Activated B cell treated with CpG ODN at 0.5 μM for 24 hours (primary cell): ENCODE measurements at regions of chr1 and their contacts with region 1.

Region 1: DNA sequence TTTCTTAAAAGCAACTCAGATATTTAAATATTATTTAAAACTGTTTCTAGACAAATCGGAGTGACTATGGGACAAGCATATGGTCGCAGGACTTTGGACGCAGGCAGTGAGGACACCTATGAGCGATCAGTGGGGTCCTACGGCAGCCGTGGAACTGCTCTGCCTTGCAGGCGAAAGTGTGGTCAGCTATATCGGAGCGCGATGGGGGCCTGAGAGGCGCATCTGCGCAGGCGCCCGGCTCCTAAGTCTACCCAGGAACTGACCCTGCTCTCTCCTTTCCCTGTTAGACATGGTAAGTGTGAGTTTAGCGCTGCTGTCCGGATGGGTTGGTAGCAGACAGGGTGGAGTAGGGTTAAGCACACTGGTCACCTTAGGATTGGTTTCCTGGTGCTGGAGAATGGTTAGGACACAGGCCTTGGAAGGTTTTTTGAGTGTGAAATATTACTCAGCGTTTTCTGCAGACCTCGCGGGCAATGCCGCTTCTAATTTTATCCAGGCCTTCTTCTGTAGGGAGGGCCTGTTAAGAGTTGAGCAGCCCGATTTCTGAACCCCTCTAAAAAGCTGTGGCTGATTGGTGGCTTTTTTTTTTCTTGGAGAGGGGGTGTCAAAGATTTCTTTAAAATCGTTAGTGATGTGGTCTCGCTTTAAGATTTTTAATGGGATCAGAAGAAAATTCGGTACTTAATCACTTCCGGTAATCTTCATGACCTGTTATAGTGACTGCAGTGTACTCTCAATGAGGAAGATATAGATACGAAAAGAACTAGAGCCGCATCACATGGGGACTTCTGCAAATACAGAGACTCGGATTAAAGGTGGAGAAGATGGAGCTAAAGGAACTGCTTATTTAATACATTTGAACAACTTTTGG is at the start of gene RABGGTB:
- DNase-seq: peak; percentile 89
- ATAC-seq: peak; percentile 92
- H3K4me3 Mint-ChIP-seq: peak within 1 kb of the TSS; percentile 98
- H3K27ac Mint-ChIP-seq: peak within 1 kb of the TSS; percentile 97
- H3K4me1 Mint-ChIP-seq: peaks cover 65% of the 10 kb centered on the region
- H3K27me3 Mint-ChIP-seq: no peaks in the 10 kb centered on the region
- CTCF ChIP-seq: no peak
- total RNA-seq, gene RABGGTB: 203 and 234 TPM in 2 replicates

Region 2: GRCh38 chr1:74197657-74198552 is 1588.3 kb before region 1 on chr1 and contains the starts of genes FPGT and LRRIQ3:
- CTCF ChIA-PET with region 1: no interaction called
- POLR2A ChIA-PET with region 1: interaction called, 3 read pairs
- intact Hi-C with region 1: loop called (anchors 5 kb)
- DNase-seq: peak; percentile 94
- ATAC-seq: peak; percentile 96
- H3K4me3 Mint-ChIP-seq: peak within 1 kb of the TSS; percentile 87
- H3K27ac Mint-ChIP-seq: peak within 1 kb of the TSS; percentile 92
- H3K4me1 Mint-ChIP-seq: peaks cover 27% of the 10 kb centered on the region
- H3K27me3 Mint-ChIP-seq: no peaks in the 10 kb centered on the region
- CTCF ChIP-seq: no peak
- total RNA-seq, gene FPGT: 10.1 and 12.0 TPM in 2 replicates
- total RNA-seq, gene LRRIQ3: 1.00 and 1.5 TPM in 2 replicates

Region 3: DNA sequence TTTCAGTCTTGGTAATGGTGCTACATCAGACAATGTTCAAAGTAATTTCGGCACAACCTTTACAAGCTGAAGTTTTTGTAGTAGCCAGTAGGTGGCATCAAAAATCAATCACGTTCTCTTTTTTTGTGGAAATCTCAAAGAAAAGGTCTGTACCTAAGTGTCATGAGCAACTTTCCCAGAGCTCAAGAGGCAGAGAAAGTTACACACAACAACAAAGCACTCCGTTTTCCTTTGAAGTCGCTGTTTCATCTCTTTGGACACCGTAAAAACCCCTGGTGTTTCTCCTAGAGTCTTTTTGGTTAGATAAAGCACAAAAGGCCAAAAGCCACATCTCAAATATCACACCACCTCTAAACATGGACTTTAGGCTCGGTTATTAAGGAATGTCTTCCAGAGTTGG is 520.4 kb before region 1 on chr1:
- CTCF ChIA-PET with region 1: no interaction called
- POLR2A ChIA-PET with region 1: no interaction called
- intact Hi-C with region 1: loop called (anchors 10 kb)
- DNase-seq: no peak
- ATAC-seq: peak; percentile 37
- H3K4me3 Mint-ChIP-seq: no peak overlapping the region
- H3K27ac Mint-ChIP-seq: no peak overlapping the region
- H3K4me1 Mint-ChIP-seq: peaks cover 20% of the 10 kb centered on the region
- H3K27me3 Mint-ChIP-seq: no peaks in the 10 kb centered on the region
- CTCF ChIP-seq: no peak

Region 4: GRCh38 chr1:75724472-75725022 is 61.7 kb before region 1 on chr1 and contains the start of gene ACADM:
- CTCF ChIA-PET with region 1: interaction called, 4 read pairs
- POLR2A ChIA-PET with region 1: interaction called, 35 read pairs
- intact Hi-C with region 1: loop called (anchors 1 kb)
- DNase-seq: peak; percentile 90
- ATAC-seq: peak; percentile 92
- H3K4me3 Mint-ChIP-seq: peak within 1 kb of the TSS; percentile 100
- H3K27ac Mint-ChIP-seq: peak within 1 kb of the TSS; percentile 94
- H3K4me1 Mint-ChIP-seq: peaks cover 43% of the 10 kb centered on the region
- H3K27me3 Mint-ChIP-seq: no peaks in the 10 kb centered on the region
- CTCF ChIP-seq: no peak
- total RNA-seq, gene ACADM: 49.4 and 49.9 TPM in 2 replicates

Region 5: DNA sequence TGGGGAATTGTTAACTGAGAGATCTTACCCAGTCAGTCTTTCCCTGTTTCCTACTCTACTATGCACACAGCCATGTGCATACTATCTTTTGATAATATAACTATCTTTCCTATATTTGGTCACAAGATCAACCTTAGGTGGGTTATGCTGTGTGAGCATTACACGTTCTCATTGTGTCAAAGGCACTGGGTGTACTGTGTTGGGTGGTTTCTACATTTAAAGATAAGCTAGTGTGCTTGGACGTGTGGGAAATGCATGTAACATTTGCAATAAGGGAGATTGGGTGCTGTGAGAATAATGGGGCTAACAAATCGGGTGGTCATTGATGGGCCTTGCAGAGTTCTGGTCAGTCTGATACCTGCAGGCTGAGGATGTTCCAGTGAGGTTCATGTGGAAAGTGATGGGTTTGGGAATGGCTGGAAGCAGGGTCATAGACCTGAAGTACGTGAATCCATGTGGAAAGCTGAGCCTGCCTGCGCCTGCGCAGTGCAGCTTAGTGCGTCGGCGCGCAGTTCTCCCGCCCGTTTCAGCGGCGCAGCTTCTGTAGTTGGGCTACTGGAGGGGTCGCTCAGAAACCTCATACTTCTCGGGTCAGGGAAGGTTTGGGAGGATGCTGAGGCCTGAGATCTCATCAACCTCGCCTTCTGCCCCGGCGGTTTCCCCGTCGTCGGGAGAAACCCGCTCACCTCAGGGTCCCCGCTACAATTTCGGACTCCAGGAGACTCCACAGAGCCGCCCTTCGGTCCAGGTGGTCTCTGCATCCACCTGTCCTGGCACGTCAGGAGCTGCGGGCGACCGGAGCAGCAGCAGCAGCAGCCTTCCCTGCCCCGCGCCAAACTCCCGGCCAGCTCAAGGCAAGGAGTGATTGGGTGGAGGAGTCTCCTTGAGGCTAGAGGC is 10.4 kb after region 1 on chr1 and contains the start of gene MSH4:
- CTCF ChIA-PET with region 1: interaction called, 4 read pairs
- POLR2A ChIA-PET with region 1: interaction called, 45 read pairs
- intact Hi-C with region 1: loop called (anchors 1 kb)
- DNase-seq: no peak
- ATAC-seq: peak; percentile 36
- H3K4me3 Mint-ChIP-seq: no peak within 1 kb of the TSS
- H3K27ac Mint-ChIP-seq: no peak within 1 kb of the TSS
- H3K4me1 Mint-ChIP-seq: peaks cover 8% of the 10 kb centered on the region
- H3K27me3 Mint-ChIP-seq: no peaks in the 10 kb centered on the region
- CTCF ChIP-seq: no peak
- total RNA-seq, gene MSH4: 1.2 and 1.4 TPM in 2 replicates

Region 6: DNA sequence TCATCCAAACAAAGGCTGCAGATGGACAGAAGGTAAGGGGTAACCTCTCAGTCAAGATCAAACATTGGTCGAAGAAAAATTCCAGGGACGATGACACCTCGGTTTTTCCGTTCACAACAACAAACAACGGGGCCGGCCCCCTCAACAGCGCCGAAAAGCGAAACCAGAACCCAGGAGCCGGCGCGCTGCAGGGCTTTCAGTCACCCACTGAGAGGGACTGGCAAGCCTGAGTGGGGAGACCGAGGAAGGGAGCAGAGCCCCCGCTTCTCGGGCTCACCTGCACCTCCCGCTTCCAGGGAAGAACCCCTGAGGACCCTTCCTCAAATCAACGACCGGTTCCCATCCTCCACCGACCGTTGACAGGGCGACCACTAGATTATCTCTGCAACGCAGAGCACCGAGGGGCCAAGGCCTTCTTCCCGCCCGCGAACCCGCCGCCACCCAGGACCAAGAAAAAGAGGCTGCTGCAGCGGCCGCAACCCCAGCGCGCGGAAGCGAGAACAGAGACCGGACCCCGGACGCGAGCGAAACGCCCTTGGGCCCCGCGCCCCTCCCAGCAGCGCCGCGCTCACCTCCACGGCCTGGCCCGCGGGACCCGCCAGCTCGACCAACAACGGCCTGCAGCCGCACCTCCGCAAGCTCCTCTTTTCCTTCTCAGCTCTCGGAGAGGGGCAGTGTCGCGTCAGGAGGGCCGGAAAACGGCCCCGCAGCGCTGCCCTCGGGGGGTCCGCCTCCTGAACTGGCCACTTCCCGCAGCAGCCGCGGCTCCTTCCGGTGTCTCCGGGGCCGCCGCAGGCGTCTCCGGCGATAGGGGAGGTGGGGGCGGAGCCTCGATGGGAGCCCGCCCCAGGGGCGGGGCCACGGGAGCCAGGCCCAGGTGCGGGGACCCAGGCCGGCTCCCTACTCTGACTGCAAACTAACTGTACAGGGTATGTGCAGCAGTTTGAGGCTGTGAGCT is 1973.1 kb after region 1 on chr1 and contains the start of gene USP33:
- CTCF ChIA-PET with region 1: no interaction called
- POLR2A ChIA-PET with region 1: no interaction called
- intact Hi-C with region 1: loop called (anchors 5 kb)
- DNase-seq: peak; percentile 95
- ATAC-seq: peak; percentile 97
- H3K4me3 Mint-ChIP-seq: peak within 1 kb of the TSS; percentile 93
- H3K27ac Mint-ChIP-seq: peak within 1 kb of the TSS; percentile 87
- H3K4me1 Mint-ChIP-seq: peaks cover 32% of the 10 kb centered on the region
- H3K27me3 Mint-ChIP-seq: peaks cover 2% of the 10 kb centered on the region
- CTCF ChIP-seq: no peak
- total RNA-seq, gene USP33: 42.1 and 58.4 TPM in 2 replicates